HAP-1 (cell line): ENCODE measurements at regions of chr5 and their contacts with region 1.

Region 1: DNA sequence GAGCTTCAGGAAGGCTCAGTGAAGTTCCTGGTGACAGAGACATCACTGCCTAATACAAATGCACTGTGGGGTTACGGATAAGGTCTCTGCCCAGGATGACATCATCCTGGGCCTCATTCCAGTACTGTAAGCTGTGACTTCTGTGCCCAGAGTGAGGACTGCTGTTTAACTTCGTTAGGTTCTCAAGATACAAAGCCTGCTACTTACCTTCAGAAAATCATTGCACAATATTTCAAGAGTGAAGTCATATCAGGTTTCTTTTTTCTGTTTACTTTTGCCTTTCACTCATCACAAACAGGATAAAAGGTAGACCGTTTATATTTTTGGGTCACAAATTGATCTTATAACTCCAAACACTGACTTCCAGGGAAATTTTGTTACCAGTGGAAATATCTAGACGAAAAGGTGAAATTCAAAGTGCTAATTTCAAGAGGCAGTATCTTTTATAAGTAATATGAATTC is 241.2 kb downstream of the PIK3R1 start:
- DNase-seq: no peak
- H3K4me3 ChIP-seq: no peak overlapping the region
- H3K4me1 ChIP-seq: peaks cover 3% of the 10 kb centered on the region; the same call in 1 of the 2 replicates
- H3K27me3 ChIP-seq: no peaks in the 10 kb centered on the region

Region 2: GRCh38 chr5:68287976-68288706 is 168.6 kb before region 1 on chr5:
- in situ Hi-C with region 1: loop called (anchors 10 kb)
- DNase-seq: no peak
- H3K4me3 ChIP-seq: no peak overlapping the region
- H3K4me1 ChIP-seq: no peaks in the 10 kb centered on the region
- H3K27me3 ChIP-seq: no peaks in the 10 kb centered on the region

Region 3: DNA sequence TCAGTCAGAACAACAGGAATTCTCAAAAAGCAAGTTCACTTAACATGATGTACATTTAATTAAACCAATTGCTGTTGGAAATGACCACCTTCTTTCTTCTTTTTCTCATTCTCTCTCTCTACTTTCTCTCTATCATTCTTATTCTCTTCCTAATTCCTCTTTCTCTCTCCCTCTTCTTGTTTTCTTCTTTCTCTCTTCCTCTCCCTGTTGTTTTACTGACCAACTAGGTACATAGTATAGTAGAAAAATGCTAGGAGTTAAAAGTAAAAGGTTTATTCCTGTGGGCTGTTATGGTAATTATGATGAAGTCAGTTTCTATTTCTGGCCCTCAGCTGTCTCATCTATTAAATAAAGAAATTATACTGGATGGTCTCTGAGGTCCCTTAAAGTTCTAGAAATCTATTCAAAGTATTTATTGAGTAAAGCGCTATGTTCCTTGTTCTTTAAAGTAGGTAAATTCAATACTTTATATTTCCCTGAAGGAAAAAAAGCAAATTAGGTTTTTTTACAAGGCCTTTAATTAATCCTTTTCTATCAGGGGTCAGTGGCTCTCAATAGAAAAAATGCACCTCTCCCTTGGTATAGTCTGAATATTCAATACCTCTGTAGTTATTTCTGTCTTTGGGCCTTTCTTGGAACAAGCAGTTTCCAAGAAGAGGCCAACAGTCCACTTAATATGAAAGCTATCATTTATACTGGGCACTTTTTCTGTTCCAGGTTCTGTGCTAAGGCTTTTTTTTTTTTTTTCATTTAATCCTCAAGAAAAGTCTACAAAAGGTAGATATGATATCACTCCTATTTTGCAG is 534.7 kb after region 1 on chr5:
- in situ Hi-C with region 1: no loop called
- DNase-seq: no peak
- H3K4me3 ChIP-seq: no peak overlapping the region
- H3K4me1 ChIP-seq: no peaks in the 10 kb centered on the region; the same call in 1 of the 2 replicates
- H3K27me3 ChIP-seq: peaks cover 10% of the 10 kb centered on the region